ENCODE measurements at regions of chr7 and their contacts with region 1.

Region 1: DNA sequence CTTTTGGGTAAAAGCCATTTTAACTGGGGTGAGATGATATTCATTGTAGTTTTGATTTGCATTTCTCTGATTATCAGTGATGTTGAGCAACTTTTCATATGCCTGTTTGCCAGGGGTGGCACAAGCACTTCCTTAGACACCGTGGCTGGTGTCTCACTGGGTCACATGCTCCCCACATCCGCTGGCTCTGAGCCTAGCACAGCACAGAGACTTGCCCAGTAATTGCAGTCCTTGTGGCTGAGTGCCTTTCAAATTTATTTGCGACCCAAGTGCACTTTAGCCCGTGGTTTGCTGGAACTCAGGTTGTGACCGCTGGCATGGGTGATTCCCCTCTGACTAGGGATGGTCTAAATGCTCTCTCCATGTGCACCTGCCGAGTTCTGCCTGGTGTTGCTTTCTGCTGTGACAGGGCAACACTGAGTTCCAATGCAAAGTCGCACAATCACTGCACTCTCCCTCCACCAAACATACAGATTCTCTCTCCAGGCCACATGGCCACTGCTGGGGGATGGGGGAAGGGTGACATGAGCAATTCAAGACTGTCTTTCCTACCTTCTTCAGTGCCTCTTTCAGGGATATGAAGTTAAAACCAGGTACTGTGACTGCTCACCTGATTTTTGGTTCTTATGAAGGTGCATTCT is 66.5 kb downstream of the ZNF277 start:
- DNase-seq: no peak
- ATAC-seq: peak; percentile 58
- H3K4me3 ChIP-seq: no peak overlapping the region
- H3K4me3 Mint-ChIP-seq: peak overlapping the region in 3 of 10 donors; percentile 5 to 11 (median 7)
- H3K27ac ChIP-seq: no peak overlapping the region
- H3K27ac Mint-ChIP-seq: peak overlapping the region in 1 of 9 donors; percentile 57
- H3K4me1 ChIP-seq: no peaks in the 10 kb centered on the region
- H3K4me1 Mint-ChIP-seq: peaks cover 0 to 39% (median 24%) of the 10 kb centered on the region in 7 donors
- H3K27me3 ChIP-seq: no peaks in the 10 kb centered on the region
- H3K27me3 Mint-ChIP-seq: no peaks in the 10 kb centered on the region

Region 2: GRCh38 chr7:112254156-112254555 is 18.9 kb before region 1 on chr7:
- CTCF ChIA-PET with region 1: no interaction called
- POLR2A ChIA-PET with region 1: no interaction called
- intact Hi-C with region 1: no loop called
- DNase-seq: no peak
- ATAC-seq: no peak
- H3K4me3 ChIP-seq: no peak overlapping the region
- H3K4me3 Mint-ChIP-seq: no peak overlapping the region
- H3K27ac ChIP-seq: no peak overlapping the region
- H3K27ac Mint-ChIP-seq: no peak overlapping the region
- H3K4me1 ChIP-seq: no peaks in the 10 kb centered on the region
- H3K4me1 Mint-ChIP-seq: peaks cover 0 to 69% (median 48%) of the 10 kb centered on the region in 7 donors
- H3K27me3 ChIP-seq: no peaks in the 10 kb centered on the region
- H3K27me3 Mint-ChIP-seq: no peaks in the 10 kb centered on the region

Region 3: GRCh38 chr7:112292162-112292561 is 19.1 kb after region 1 on chr7:
- CTCF ChIA-PET with region 1: no interaction called
- POLR2A ChIA-PET with region 1: no interaction called
- intact Hi-C with region 1: loop called in 1 of 2 experiments (anchors 2 kb)
- DNase-seq: no peak
- ATAC-seq: no peak
- H3K4me3 ChIP-seq: no peak overlapping the region
- H3K4me3 Mint-ChIP-seq: no peak overlapping the region
- H3K27ac ChIP-seq: no peak overlapping the region
- H3K27ac Mint-ChIP-seq: no peak overlapping the region
- H3K4me1 ChIP-seq: peaks cover 0 to 5% of the 10 kb centered on the region in 2 donors
- H3K4me1 Mint-ChIP-seq: peaks cover 0 to 8% (median 0%) of the 10 kb centered on the region in 7 donors
- H3K27me3 ChIP-seq: no peaks in the 10 kb centered on the region
- H3K27me3 Mint-ChIP-seq: no peaks in the 10 kb centered on the region

Region 4: GRCh38 chr7:112398534-112398933 is 125.5 kb after region 1 on chr7:
- CTCF ChIA-PET with region 1: no interaction called
- POLR2A ChIA-PET with region 1: no interaction called
- intact Hi-C with region 1: no loop called
- DNase-seq: no peak
- ATAC-seq: peak; percentile 88
- H3K4me3 ChIP-seq: no peak overlapping the region
- H3K4me3 Mint-ChIP-seq: peak overlapping the region in 6 of 10 donors; percentile 10 to 55 (median 42)
- H3K27ac ChIP-seq: no peak overlapping the region
- H3K27ac Mint-ChIP-seq: peak overlapping the region in 2 of 9 donors; percentile 47 to 69
- H3K4me1 ChIP-seq: peaks cover 0 to 16% of the 10 kb centered on the region in 2 donors
- H3K4me1 Mint-ChIP-seq: peaks cover 14 to 27% (median 20%) of the 10 kb centered on the region in 7 donors
- H3K27me3 ChIP-seq: no peaks in the 10 kb centered on the region
- H3K27me3 Mint-ChIP-seq: peaks cover 0 to 34% (median 4%) of the 10 kb centered on the region in 5 donors